ENCODE measurements at regions of chr2 and their contacts with region 1.

Region 1: DNA sequence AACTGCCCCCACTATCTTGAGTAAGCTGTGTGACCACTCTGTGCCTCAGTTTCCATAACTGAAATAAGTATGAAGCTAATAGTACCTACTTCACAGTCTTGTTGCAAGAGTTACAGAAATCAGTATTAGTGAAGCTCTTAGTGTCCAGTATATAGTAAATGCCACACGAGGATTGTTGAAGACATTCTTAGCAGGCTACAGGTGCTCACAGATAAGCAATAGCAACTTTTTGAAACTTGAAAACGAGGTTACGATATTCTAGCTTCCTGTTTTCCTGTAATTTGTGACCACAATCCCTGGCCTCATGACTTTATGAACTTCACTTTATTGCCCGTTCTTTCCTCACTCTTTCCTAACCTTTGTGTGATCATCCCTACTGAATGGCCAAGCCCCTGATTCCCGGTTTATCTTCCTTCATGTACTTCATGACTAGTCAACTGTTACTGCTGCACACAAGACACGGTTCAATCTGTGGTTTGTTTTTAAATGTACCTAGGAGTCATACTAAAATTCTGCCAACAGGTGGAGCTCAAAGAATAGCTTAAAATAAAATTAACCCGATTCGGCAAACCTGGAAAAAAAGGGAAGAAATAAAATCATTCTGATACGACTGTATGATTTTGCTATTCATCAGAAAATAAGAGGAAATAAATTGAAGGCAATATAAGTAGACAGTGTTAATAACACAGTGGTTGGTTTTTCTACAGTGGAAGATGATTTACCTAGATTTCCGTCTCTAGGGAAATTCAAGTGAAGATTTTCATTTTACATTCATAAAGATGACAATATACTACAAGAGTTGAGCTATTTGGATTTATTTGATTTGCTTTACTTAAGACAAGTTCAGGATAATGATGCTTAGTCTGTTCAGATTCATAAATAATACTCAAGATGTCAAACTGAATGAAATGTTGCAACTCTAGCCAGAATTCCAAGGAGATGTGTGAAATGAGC is 38.1 kb upstream of the STAT1 start:
- DNase-seq: peak; percentile 45
- ATAC-seq: peak; percentile 78
- H3K4me3 ChIP-seq: no peak overlapping the region
- H3K27ac ChIP-seq: no peak overlapping the region
- H3K4me1 ChIP-seq: peaks cover 0 to 8% of the 10 kb centered on the region in 2 experiments; a peak in 1 of 4 replicates
- H3K27me3 ChIP-seq: no peaks in the 10 kb centered on the region
- CTCF ChIP-seq: peak; percentile 54 to 83 (median 73); a peak in 5 of 6 replicates
- POLR2A ChIP-seq: no peak
- RAD21 ChIP-seq: peak; percentile 86

Region 2: DNA sequence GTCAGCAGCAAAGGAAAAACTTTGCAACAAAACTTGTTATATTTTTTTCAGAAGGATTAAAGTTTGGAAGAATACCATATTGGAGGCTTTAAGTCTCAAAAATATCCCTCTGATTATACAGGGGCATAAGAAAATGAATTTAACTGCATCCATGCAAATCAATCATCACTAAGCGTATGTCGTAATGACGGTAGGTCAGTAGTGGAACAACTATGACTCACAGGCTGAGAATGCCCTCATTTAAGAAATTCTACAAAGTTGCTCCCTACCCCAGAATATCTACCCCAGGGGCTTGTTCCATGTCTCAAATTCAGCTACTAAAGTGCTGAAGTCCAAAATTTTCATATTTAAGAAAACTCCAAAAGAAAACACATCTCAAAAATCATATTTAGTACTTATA is 415.7 kb before region 1 on chr2:
- CTCF ChIA-PET with region 1: no interaction called
- POLR2A ChIA-PET with region 1: no interaction called
- RAD21 ChIA-PET with region 1: no interaction called
- intact Hi-C with region 1: no loop called
- DNase-seq: no peak
- ATAC-seq: peak; percentile 63
- H3K4me3 ChIP-seq: no peak overlapping the region
- H3K27ac ChIP-seq: no peak overlapping the region
- H3K4me1 ChIP-seq: peaks cover 7 to 13% of the 10 kb centered on the region in 2 experiments; a peak in 3 of 4 replicates
- H3K27me3 ChIP-seq: no peaks in the 10 kb centered on the region
- CTCF ChIP-seq: no peak
- POLR2A ChIP-seq: no peak
- RAD21 ChIP-seq: no peak

Region 3: GRCh38 chr2:191066197-191066918 is 14.3 kb after region 1 on chr2:
- CTCF ChIA-PET with region 1: interaction called, 27 read pairs
- POLR2A ChIA-PET with region 1: no interaction called
- RAD21 ChIA-PET with region 1: no interaction called
- intact Hi-C with region 1: no loop called
- DNase-seq: no peak
- ATAC-seq: no peak
- H3K4me3 ChIP-seq: no peak overlapping the region
- H3K27ac ChIP-seq: no peak overlapping the region
- H3K4me1 ChIP-seq: no peaks in the 10 kb centered on the region
- H3K27me3 ChIP-seq: no peaks in the 10 kb centered on the region
- CTCF ChIP-seq: no peak
- POLR2A ChIP-seq: no peak
- RAD21 ChIP-seq: no peak

Region 4: GRCh38 chr2:191158193-191158592 is 106.1 kb after region 1 on chr2:
- CTCF ChIA-PET with region 1: interaction called, 171 read pairs
- POLR2A ChIA-PET with region 1: interaction called, 9 read pairs
- RAD21 ChIA-PET with region 1: interaction called, 15 to 18 read pairs
- intact Hi-C with region 1: loop called (anchors 1 kb)
- DNase-seq: no peak
- ATAC-seq: no peak
- H3K4me3 ChIP-seq: no peak overlapping the region
- H3K27ac ChIP-seq: no peak overlapping the region
- H3K4me1 ChIP-seq: peaks cover 0 to 3% of the 10 kb centered on the region in 2 experiments; a peak in 1 of 4 replicates
- H3K27me3 ChIP-seq: no peaks in the 10 kb centered on the region
- CTCF ChIP-seq: no peak
- POLR2A ChIP-seq: no peak
- RAD21 ChIP-seq: no peak

Region 5: GRCh38 chr2:191218292-191218898 is 166.3 kb after region 1 on chr2:
- CTCF ChIA-PET with region 1: interaction called, 16 read pairs
- POLR2A ChIA-PET with region 1: no interaction called
- RAD21 ChIA-PET with region 1: interaction called in 1 of 2 experiments, 3 read pairs
- intact Hi-C with region 1: no loop called
- DNase-seq: peak; percentile 67
- ATAC-seq: peak; percentile 92
- H3K4me3 ChIP-seq: no peak overlapping the region
- H3K27ac ChIP-seq: no peak overlapping the region
- H3K4me1 ChIP-seq: peaks cover 10 to 27% of the 10 kb centered on the region in 2 experiments; a peak in 3 of 4 replicates
- H3K27me3 ChIP-seq: no peaks in the 10 kb centered on the region
- CTCF ChIP-seq: peak; percentile 73 to 90 (median 76)
- POLR2A ChIP-seq: no peak
- RAD21 ChIP-seq: peak; percentile 83

Region 6: GRCh38 chr2:191521608-191522208 is 469.6 kb after region 1 on chr2:
- CTCF ChIA-PET with region 1: interaction called, 11 read pairs
- POLR2A ChIA-PET with region 1: no interaction called
- RAD21 ChIA-PET with region 1: interaction called in 1 of 2 experiments, 8 read pairs
- intact Hi-C with region 1: loop called (anchors 1 kb)
- DNase-seq: peak; percentile 26
- ATAC-seq: no peak
- H3K4me3 ChIP-seq: no peak overlapping the region
- H3K27ac ChIP-seq: no peak overlapping the region
- H3K4me1 ChIP-seq: no peaks in the 10 kb centered on the region
- H3K27me3 ChIP-seq: no peaks in the 10 kb centered on the region
- CTCF ChIP-seq: peak; percentile 64 to 84 (median 79)
- POLR2A ChIP-seq: no peak
- RAD21 ChIP-seq: peak; percentile 87